PC-3 (cell line): ENCODE measurements at regions of chr10 and their contacts with region 1.

Region 1: DNA sequence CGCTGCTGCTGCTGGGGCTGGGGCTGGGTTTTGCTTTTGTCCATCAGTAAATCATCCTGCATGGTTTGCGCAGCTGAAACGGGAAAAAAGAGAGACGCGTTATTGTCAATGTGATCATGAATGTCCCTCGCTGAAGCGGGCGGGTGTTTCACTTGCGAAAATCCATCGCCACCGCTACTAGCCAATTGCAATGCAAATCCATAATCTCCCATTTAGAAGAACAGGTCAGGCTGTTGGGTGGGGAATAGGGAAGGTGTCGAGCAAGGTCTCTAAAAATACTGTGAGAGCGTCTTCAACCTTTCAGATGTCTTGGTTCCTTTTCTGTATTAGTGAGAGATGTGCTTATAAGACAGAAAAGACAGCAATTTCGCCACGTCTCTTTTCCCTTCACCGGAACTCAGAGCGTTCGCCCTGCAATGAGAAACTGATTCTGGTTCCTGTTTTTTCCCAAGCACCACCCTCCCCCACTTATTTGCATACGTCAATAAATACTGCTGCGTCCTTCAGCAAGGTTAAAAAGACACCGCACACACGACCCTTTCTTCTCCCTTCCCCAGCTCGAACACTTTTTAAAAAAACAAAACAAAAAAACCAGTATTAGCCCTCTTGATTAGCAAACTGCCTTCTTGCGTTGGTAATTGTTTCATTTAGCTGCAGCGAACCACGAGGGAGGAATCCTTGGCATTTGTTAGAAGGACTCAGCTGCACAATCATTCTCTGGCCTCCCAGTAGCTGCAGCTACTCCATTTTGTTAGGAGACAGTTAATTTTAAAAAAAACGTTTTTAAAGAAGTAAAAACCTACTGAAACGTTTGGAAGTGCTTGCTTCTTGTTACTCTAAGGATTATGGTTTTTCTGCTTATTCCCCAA is 50.4 kb downstream of the CPEB3 start:
- DNase-seq: peak; percentile 59
- ATAC-seq: peak; percentile 39
- H3K4me3 ChIP-seq: peak overlapping the region; percentile 75
- H3K27ac ChIP-seq: 0 out of 2 replicates have a peak overlapping the region, but pooled peaks have one; percentile 4
- H3K4me1 ChIP-seq: peaks cover 45% of the 10 kb centered on the region
- H3K27me3 ChIP-seq: no peaks in the 10 kb centered on the region
- CTCF ChIP-seq: no peak

Region 2: GRCh38 chr10:92142949-92143348 is 97.6 kb before region 1 on chr10:
- CTCF ChIA-PET with region 1: no interaction called
- POLR2A ChIA-PET with region 1: no interaction called
- intact Hi-C with region 1: loop called (anchors 5 kb)
- DNase-seq: no peak
- ATAC-seq: peak; percentile 28; the same call in 1 of the 2 replicates
- H3K4me3 ChIP-seq: no peak overlapping the region
- H3K27ac ChIP-seq: peak overlapping the region; percentile 66; the same call in 1 of the 2 replicates
- H3K4me1 ChIP-seq: peaks cover 16% of the 10 kb centered on the region
- H3K27me3 ChIP-seq: no peaks in the 10 kb centered on the region
- CTCF ChIP-seq: no peak

Region 3: GRCh38 chr10:92208736-92209327 is 31.7 kb before region 1 on chr10:
- CTCF ChIA-PET with region 1: no interaction called
- POLR2A ChIA-PET with region 1: interaction called, 12 read pairs
- intact Hi-C with region 1: no loop called
- DNase-seq: peak; percentile 43
- ATAC-seq: no peak; the same call in 1 of the 2 replicates
- H3K4me3 ChIP-seq: no peak overlapping the region
- H3K27ac ChIP-seq: peak overlapping the region; percentile 58
- H3K4me1 ChIP-seq: peaks cover 27% of the 10 kb centered on the region; the same call in 1 of the 2 replicates
- H3K27me3 ChIP-seq: no peaks in the 10 kb centered on the region
- CTCF ChIP-seq: no peak

Region 4: GRCh38 chr10:92222603-92223275 is 17.8 kb before region 1 on chr10:
- CTCF ChIA-PET with region 1: no interaction called
- POLR2A ChIA-PET with region 1: interaction called, 14 read pairs
- intact Hi-C with region 1: loop called (anchors 2 kb)
- DNase-seq: peak; percentile 84
- ATAC-seq: peak; percentile 79
- H3K4me3 ChIP-seq: peak overlapping the region; percentile 44; the same call in 1 of the 2 replicates
- H3K27ac ChIP-seq: peak overlapping the region; percentile 93
- H3K4me1 ChIP-seq: peaks cover 27% of the 10 kb centered on the region
- H3K27me3 ChIP-seq: no peaks in the 10 kb centered on the region
- CTCF ChIP-seq: no peak

Region 5: GRCh38 chr10:92562424-92562823 is 321.9 kb after region 1 on chr10:
- CTCF ChIA-PET with region 1: no interaction called
- POLR2A ChIA-PET with region 1: no interaction called
- intact Hi-C with region 1: no loop called
- DNase-seq: no peak
- ATAC-seq: peak; percentile 35; the same call in 1 of the 2 replicates
- H3K4me3 ChIP-seq: no peak overlapping the region
- H3K27ac ChIP-seq: no peak overlapping the region
- H3K4me1 ChIP-seq: peaks cover 5% of the 10 kb centered on the region
- H3K27me3 ChIP-seq: no peaks in the 10 kb centered on the region
- CTCF ChIP-seq: no peak

Region 6: DNA sequence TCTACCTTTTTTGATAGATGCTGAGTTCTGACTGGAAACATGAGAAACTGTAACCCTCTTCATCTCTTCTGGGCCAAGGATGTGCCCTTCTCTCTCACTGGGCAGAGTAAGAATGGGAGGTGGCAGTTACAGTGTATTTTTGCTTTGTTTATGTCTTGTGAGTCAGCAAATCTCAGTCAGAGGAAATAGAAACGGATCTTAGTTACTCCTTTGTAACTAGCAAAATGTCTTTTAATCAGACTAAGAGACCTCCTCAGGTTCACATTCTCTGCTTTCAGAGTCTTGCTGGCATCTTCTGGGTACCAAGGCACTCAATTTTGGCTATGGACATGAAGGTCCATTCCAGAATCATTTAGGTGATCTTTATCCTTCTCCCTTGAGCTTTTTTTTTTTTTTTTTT is 520.1 kb after region 1 on chr10:
- CTCF ChIA-PET with region 1: no interaction called
- POLR2A ChIA-PET with region 1: no interaction called
- intact Hi-C with region 1: no loop called
- DNase-seq: peak; percentile 16
- ATAC-seq: peak; percentile 76
- H3K4me3 ChIP-seq: no peak overlapping the region
- H3K27ac ChIP-seq: no peak overlapping the region
- H3K4me1 ChIP-seq: peaks cover 16% of the 10 kb centered on the region
- H3K27me3 ChIP-seq: no peaks in the 10 kb centered on the region
- CTCF ChIP-seq: no peak